Activated naive CD8-positive, alpha-beta T cell treated with anti-CD3 and anti-CD28 coated beads, Interleukin-2, amount 10 ng/mL, durations not matched to agents 7 days and 5 days (primary cell): ENCODE measurements at regions of chrX and their contacts with region 1.

Region 1: GRCh38 chrX:53683556-53684414 is 2.7 kb downstream of the HUWE1 start:
- DNase-seq: peak; percentile 83
- ATAC-seq: peak; percentile 72
- H3K4me3 Mint-ChIP-seq: peak overlapping the region; percentile 89
- H3K27ac Mint-ChIP-seq: peak overlapping the region; percentile 97
- H3K4me1 Mint-ChIP-seq: peaks cover 24% of the 10 kb centered on the region
- H3K27me3 Mint-ChIP-seq: no peaks in the 10 kb centered on the region

Region 2: GRCh38 chrX:53284684-53285447 is 398.9 kb before region 1 on chrX:
- POLR2A ChIA-PET with region 1: no interaction called
- DNase-seq: peak; percentile 53
- ATAC-seq: peak; percentile 29
- H3K4me3 Mint-ChIP-seq: no peak overlapping the region
- H3K27ac Mint-ChIP-seq: peak overlapping the region; percentile 45
- H3K4me1 Mint-ChIP-seq: peaks cover 23% of the 10 kb centered on the region
- H3K27me3 Mint-ChIP-seq: no peaks in the 10 kb centered on the region

Region 3: DNA sequence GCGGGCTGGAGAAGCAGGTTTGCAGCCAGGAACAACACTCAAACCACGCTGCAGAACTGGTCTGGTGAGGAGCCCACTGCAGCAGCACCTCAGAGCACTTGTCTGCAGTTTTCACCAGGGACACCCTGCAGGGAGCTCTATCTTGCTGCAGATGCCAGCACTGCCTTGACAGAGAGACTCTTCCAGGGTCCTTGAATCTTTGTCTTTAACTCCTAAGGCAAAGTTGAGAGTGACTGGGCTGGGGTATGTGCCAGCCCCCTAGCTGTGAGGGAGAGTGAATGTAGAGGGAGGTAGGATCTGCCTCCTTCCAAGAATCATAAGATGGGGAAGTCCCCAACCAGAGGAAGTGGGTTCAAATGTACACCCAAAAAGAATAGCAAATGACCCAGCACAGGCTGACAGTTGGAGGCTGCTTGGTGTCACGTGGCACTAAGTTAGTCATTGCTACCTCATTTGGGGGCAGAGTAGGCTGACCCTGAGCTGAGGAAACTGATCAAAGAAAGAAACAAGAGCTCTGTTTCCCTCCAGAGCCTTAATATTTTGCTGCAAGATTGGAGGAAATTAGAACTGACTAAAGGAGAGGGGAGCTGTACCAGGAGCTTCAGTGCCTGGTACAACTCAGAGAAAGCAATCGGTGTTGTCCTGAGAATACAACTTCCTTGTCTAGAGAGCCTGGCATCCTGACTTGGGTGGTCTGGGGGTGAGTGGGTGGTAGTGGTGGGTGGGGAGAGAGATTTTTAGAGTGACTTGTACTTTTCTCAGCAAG is 31.0 kb after region 1 on chrX:
- POLR2A ChIA-PET with region 1: interaction called, 156 read pairs
- DNase-seq: peak; percentile 56
- ATAC-seq: peak; percentile 90
- H3K4me3 Mint-ChIP-seq: peak overlapping the region; percentile 94
- H3K27ac Mint-ChIP-seq: peak overlapping the region; percentile 99
- H3K4me1 Mint-ChIP-seq: peaks cover 34% of the 10 kb centered on the region
- H3K27me3 Mint-ChIP-seq: no peaks in the 10 kb centered on the region